Right cardiac atrium (tissue), 5 donors: ENCODE measurements at regions of chr2 and their contacts with region 1.

Region 1: DNA sequence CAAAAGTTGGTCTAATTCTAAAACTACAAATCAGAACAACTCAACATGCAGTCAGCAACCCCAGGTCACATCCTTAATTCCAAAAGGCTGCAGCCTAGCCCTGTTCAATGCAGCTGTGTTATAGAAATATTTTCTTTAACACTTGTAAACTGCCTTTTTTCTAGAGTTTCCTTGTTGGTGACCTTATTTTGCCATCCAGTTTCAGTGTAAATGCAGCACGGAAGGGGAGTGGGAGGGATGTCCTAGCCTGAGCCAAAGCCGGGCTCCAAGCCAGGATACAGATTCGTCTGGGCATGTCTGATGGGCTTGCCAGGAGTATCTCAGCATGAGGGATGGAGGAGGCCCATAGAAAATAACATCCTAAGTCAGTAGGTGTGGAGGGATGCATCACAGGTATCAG is 17.7 kb upstream of the SP3 start:
- DNase-seq: peak; percentile 44 to 80 (median 79)
- ATAC-seq: peak; percentile 67 to 74
- H3K4me3 ChIP-seq: no peak overlapping the region
- H3K27ac ChIP-seq: no peak overlapping the region
- H3K4me1 ChIP-seq: peaks cover 9% of the 10 kb centered on the region
- H3K27me3 ChIP-seq: no peaks in the 10 kb centered on the region

Region 2: GRCh38 chr2:173866874-173867618 is 115.9 kb before region 1 on chr2:
- intact Hi-C with region 1: no loop called
- DNase-seq: no peak
- ATAC-seq: no peak
- H3K4me3 ChIP-seq: no peak overlapping the region
- H3K27ac ChIP-seq: no peak overlapping the region
- H3K4me1 ChIP-seq: no peaks in the 10 kb centered on the region
- H3K27me3 ChIP-seq: no peaks in the 10 kb centered on the region

Region 3: GRCh38 chr2:174039551-174040416 is 56.9 kb after region 1 on chr2:
- intact Hi-C with region 1: loop called in 1 of 4 experiments (anchors 10 kb)
- DNase-seq: peak; percentile 91 to 96 (median 92)
- ATAC-seq: peak; percentile 92 to 95
- H3K4me3 ChIP-seq: no peak overlapping the region
- H3K27ac ChIP-seq: peak overlapping the region; percentile 75
- H3K4me1 ChIP-seq: peaks cover 6% of the 10 kb centered on the region
- H3K27me3 ChIP-seq: no peaks in the 10 kb centered on the region

Region 4: DNA sequence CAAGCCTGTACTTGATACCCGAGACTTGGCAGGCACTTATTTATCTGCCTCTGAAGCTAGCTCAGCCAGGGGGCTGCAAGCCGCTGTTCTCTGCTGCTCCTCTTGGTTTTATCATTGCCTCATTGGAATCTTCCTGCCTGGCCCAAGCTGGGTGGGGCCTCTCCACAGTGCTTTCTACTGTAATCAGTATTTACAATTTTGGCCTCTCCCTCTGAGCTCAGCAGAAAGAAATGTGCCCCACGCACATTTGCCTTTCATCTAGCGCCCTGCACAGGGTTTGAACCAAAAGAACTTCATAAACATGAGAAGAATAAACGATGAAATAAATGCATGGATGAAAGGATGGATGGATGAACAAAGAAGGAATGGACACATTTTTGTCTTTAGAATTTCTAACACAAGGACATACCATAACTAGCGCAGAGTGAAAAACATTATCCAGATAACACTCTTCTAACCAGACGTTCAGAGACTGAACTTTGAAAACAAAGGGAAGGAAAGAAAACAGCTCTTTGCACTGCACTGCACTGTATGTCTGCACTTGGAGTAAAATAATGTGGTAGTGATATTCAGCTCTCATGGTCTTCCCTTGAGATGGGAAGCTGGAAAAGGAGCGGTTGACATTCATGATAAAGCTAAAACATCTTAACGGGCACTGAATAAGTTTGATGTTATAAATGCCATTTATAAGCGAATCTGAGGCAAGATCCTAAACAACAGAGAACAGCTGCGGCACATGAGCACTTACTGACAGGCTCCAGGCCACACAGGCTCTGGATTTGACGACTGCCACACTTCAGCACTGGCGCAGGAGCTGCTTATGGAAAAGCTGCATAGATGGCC is 69.0 kb after region 1 on chr2:
- intact Hi-C with region 1: no loop called
- DNase-seq: peak; percentile 21 to 78 (median 49)
- ATAC-seq: peak; percentile 80 to 86
- H3K4me3 ChIP-seq: no peak overlapping the region
- H3K27ac ChIP-seq: no peak overlapping the region
- H3K4me1 ChIP-seq: peaks cover 7% of the 10 kb centered on the region
- H3K27me3 ChIP-seq: no peaks in the 10 kb centered on the region